ENCODE measurements at regions of chr4 and their contacts with region 1.

Region 1: DNA sequence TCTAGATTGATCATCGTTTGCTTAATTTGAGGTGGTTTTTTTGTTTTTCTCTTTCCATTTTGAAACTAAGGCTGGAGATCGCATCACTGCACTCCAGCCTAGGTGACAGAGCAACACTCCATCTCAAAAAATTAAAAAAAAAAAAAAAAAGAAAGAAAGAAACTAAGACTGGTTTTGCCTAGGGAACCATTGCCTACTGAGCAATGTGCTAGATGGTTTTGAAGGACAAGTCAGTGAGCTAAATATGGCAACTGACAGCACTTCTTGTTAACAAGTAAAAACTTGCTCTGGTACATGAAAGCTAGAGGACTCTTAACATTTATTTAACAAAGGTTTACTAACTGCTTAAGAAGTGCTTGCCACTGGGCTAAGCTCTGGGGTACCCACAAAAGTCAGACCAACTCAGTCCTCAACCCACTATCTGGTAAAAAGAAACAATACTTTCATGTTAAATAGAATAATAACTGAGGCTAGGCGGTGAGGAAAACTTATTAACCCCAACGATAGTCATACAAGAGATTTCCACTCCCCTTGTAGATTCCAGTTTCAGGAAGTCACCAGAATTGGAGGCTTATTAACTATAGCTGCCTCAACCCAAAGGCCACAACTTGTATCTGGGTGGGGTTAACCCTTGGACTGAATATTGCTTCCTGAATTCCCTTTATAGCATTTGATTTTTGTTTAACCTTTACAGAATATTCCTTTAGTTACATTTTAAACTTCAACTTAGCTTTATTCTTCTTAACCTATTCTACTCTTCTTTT is 111.6 kb downstream of the FRYL start:
- DNase-seq: no peak
- H3K4me3 ChIP-seq: no peak overlapping the region
- H3K27ac ChIP-seq: no peak overlapping the region
- H3K4me1 ChIP-seq: peaks cover 29% of the 10 kb centered on the region
- H3K27me3 ChIP-seq: no peaks in the 10 kb centered on the region
- CTCF ChIP-seq: no peak
- POLR2A ChIP-seq: no peak

Region 2: GRCh38 chr4:48623182-48623780 is 45.2 kb before region 1 on chr4:
- CTCF ChIA-PET with region 1: no interaction called
- POLR2A ChIA-PET with region 1: no interaction called
- dilution Hi-C with region 1: no loop called
- intact Hi-C with region 1: loop called (anchors 5 kb)
- DNase-seq: no peak
- H3K4me3 ChIP-seq: no peak overlapping the region
- H3K27ac ChIP-seq: no peak overlapping the region
- H3K4me1 ChIP-seq: no peaks in the 10 kb centered on the region
- H3K27me3 ChIP-seq: no peaks in the 10 kb centered on the region
- CTCF ChIP-seq: no peak
- POLR2A ChIP-seq: no peak